ENCODE measurements at regions of chr1 and their contacts with region 1.

Region 1: GRCh38 chr1:1115786-1116700 is at the start of gene C1orf159:
- DNase-seq: peak; percentile 98 to 100 (median 98)
- ATAC-seq: peak; percentile 94
- H3K4me3 ChIP-seq: peak within 1 kb of the TSS; percentile 51 to 66
- H3K4me3 Mint-ChIP-seq: peak within 1 kb of the TSS; percentile 90
- H3K27ac ChIP-seq: peak within 1 kb of the TSS; percentile 47 to 64
- H3K27ac Mint-ChIP-seq: peak within 1 kb of the TSS; percentile 82
- H3K4me1 ChIP-seq: peaks cover 11% of the 10 kb centered on the region
- H3K4me1 Mint-ChIP-seq: peaks cover 13% of the 10 kb centered on the region
- H3K27me3 ChIP-seq: peaks cover 0 to 3% of the 10 kb centered on the region in 2 experiments
- H3K27me3 Mint-ChIP-seq: peaks cover 4% of the 10 kb centered on the region
- CTCF ChIP-seq: no peak
- total RNA-seq, gene C1orf159: 14.3 to 17.6 TPM

Region 2: GRCh38 chr1:975896-976683 is 140.0 kb before region 1 on chr1:
- CTCF ChIA-PET with region 1: no interaction called
- POLR2A ChIA-PET with region 1: no interaction called
- intact Hi-C with region 1: no loop called
- DNase-seq: peak in 8 of 9 experiments; percentile 56 to 82 (median 72)
- ATAC-seq: peak; percentile 88
- H3K4me3 ChIP-seq: no peak overlapping the region
- H3K4me3 Mint-ChIP-seq: peak overlapping the region; percentile 37
- H3K27ac ChIP-seq: no peak overlapping the region
- H3K27ac Mint-ChIP-seq: no peak overlapping the region
- H3K4me1 ChIP-seq: peaks cover 9% of the 10 kb centered on the region
- H3K4me1 Mint-ChIP-seq: peaks cover 9% of the 10 kb centered on the region
- H3K27me3 ChIP-seq: peaks cover 8 to 27% of the 10 kb centered on the region in 2 experiments
- H3K27me3 Mint-ChIP-seq: peaks cover 19% of the 10 kb centered on the region
- CTCF ChIP-seq: peak; percentile 59

Region 3: GRCh38 chr1:1013105-1013921 is 102.7 kb before region 1 on chr1 and contains the start of gene ISG15:
- CTCF ChIA-PET with region 1: no interaction called
- POLR2A ChIA-PET with region 1: interaction called, 3 read pairs
- intact Hi-C with region 1: loop called in 1 of 2 experiments (anchors 1 kb)
- DNase-seq: peak; percentile 79 to 96 (median 90)
- ATAC-seq: peak; percentile 94
- H3K4me3 ChIP-seq: peak within 1 kb of the TSS; percentile 75 to 78
- H3K4me3 Mint-ChIP-seq: peak within 1 kb of the TSS; percentile 98
- H3K27ac ChIP-seq: peak within 1 kb of the TSS; percentile 79 to 87
- H3K27ac Mint-ChIP-seq: peak within 1 kb of the TSS; percentile 99
- H3K4me1 ChIP-seq: peaks cover 23% of the 10 kb centered on the region
- H3K4me1 Mint-ChIP-seq: peaks cover 40% of the 10 kb centered on the region
- H3K27me3 ChIP-seq: no peaks in the 10 kb centered on the region
- H3K27me3 Mint-ChIP-seq: peaks cover 4% of the 10 kb centered on the region
- CTCF ChIP-seq: no peak
- total RNA-seq, gene ISG15: 56.4 to 58.4 TPM

Region 4: DNA sequence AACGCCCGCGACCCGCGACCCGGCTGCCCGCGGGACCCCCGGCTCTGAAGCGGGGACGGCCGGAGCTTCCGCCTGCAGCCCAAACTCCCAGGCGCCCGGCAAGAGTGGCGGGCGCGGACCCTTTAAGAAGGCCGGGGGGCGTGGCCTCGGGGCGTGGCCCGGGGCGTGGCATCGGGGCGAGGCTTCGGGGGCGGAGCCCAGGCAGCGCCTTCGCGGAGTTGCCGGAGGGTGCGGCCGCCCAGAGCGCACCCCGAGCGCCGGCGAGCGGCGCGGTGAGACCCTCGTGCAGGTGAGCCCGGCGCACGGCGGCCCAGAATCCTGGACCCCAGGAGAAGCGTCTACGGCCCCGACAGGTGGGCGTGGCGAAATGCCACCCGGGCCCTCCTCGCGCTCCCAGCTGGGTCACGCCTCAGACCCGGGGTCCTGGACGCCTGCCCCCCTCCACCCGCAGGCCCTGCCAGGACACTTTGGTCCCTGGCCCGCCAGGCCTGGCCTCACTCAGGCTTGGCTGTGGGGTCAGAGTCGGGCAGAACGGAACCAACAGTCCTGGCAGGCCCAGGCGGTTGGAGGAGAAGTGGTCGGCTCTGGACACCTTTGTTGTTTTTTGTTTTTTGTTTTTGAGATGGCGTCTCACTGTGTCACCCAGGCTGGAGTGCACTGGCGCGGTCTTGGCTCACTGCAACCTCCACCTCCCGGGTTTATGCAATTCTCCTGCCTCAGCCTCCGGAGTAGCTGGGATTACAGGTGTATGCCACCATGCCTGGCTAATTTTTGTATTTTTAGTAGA is 56.4 kb before region 1 on chr1:
- CTCF ChIA-PET with region 1: interaction called, 3 read pairs
- POLR2A ChIA-PET with region 1: no interaction called
- intact Hi-C with region 1: loop called in 1 of 2 experiments (anchors 1 kb)
- DNase-seq: peak; percentile 86 to 96 (median 90)
- ATAC-seq: peak; percentile 67
- H3K4me3 ChIP-seq: peak overlapping the region; percentile 19 to 66
- H3K4me3 Mint-ChIP-seq: peak overlapping the region; percentile 51
- H3K27ac ChIP-seq: no peak overlapping the region
- H3K27ac Mint-ChIP-seq: no peak overlapping the region
- H3K4me1 ChIP-seq: peaks cover 45% of the 10 kb centered on the region
- H3K4me1 Mint-ChIP-seq: peaks cover 13% of the 10 kb centered on the region
- H3K27me3 ChIP-seq: peaks cover 0 to 38% of the 10 kb centered on the region in 2 experiments
- H3K27me3 Mint-ChIP-seq: peaks cover 17% of the 10 kb centered on the region
- CTCF ChIP-seq: no peak

Region 5: DNA sequence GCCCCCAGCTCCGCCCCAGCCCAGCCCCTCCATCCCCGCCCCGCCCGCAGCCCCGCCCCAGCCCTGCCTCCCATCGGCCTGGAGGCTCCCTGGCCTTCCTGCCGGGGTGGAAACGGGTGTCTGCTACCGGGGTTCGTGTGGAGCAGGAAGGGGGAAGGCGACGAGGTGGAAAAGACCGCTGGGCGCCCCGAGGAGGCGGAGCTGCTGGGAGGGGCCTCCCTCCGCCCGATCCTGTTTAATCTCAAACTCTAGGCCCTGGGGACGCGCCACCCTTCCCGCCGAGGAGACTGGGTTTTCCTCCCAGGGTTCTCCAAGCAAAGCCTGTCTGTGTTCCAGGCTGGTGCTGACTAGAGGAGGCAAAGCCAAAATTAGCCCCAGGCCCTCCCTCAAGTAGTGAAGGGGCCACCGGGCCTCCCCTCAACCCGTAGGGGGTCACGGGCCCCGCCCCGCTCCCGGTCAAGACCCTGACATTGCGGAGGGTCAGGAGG is 41.4 kb after region 1 on chr1:
- CTCF ChIA-PET with region 1: no interaction called
- POLR2A ChIA-PET with region 1: no interaction called
- intact Hi-C with region 1: no loop called
- DNase-seq: peak in 8 of 9 experiments; percentile 43 to 82 (median 60)
- ATAC-seq: peak; percentile 75
- H3K4me3 ChIP-seq: peak overlapping the region; percentile 71 to 90
- H3K4me3 Mint-ChIP-seq: peak overlapping the region; percentile 78
- H3K27ac ChIP-seq: peak overlapping the region; percentile 70 to 87
- H3K27ac Mint-ChIP-seq: peak overlapping the region; percentile 69
- H3K4me1 ChIP-seq: peaks cover 10% of the 10 kb centered on the region
- H3K4me1 Mint-ChIP-seq: peaks cover 2% of the 10 kb centered on the region
- H3K27me3 ChIP-seq: no peaks in the 10 kb centered on the region
- H3K27me3 Mint-ChIP-seq: no peaks in the 10 kb centered on the region
- CTCF ChIP-seq: no peak

Region 6: GRCh38 chr1:1231400-1232223 is 115.6 kb after region 1 on chr1 and contains the start of gene SDF4:
- CTCF ChIA-PET with region 1: interaction called, 3 read pairs
- POLR2A ChIA-PET with region 1: no interaction called
- intact Hi-C with region 1: loop called (anchors 1 kb)
- DNase-seq: peak; percentile 91 to 99 (median 96)
- ATAC-seq: peak; percentile 93
- H3K4me3 ChIP-seq: peak within 1 kb of the TSS; percentile 92 to 96
- H3K4me3 Mint-ChIP-seq: peak within 1 kb of the TSS; percentile 93
- H3K27ac ChIP-seq: peak within 1 kb of the TSS; percentile 80 to 88
- H3K27ac Mint-ChIP-seq: peak within 1 kb of the TSS; percentile 92
- H3K4me1 ChIP-seq: peaks cover 40% of the 10 kb centered on the region
- H3K4me1 Mint-ChIP-seq: peaks cover 39% of the 10 kb centered on the region
- H3K27me3 ChIP-seq: no peaks in the 10 kb centered on the region
- H3K27me3 Mint-ChIP-seq: no peaks in the 10 kb centered on the region
- CTCF ChIP-seq: no peak
- total RNA-seq, gene SDF4: 66.6 to 70.3 TPM

Region 7: GRCh38 chr1:1349256-1350012 is 233.4 kb after region 1 on chr1 and contains the start of gene DVL1:
- CTCF ChIA-PET with region 1: no interaction called
- POLR2A ChIA-PET with region 1: no interaction called
- intact Hi-C with region 1: loop called in 1 of 2 experiments (anchors 1 kb)
- DNase-seq: peak; percentile 50 to 86 (median 72)
- ATAC-seq: peak; percentile 84
- H3K4me3 ChIP-seq: peak within 1 kb of the TSS; percentile 57 to 63
- H3K4me3 Mint-ChIP-seq: peak within 1 kb of the TSS; percentile 76
- H3K27ac ChIP-seq: peak within 1 kb of the TSS; percentile 46 to 72
- H3K27ac Mint-ChIP-seq: peak within 1 kb of the TSS; percentile 41
- H3K4me1 ChIP-seq: peaks cover 27% of the 10 kb centered on the region
- H3K4me1 Mint-ChIP-seq: peaks cover 29% of the 10 kb centered on the region
- H3K27me3 ChIP-seq: peaks cover 0 to 16% of the 10 kb centered on the region in 2 experiments
- H3K27me3 Mint-ChIP-seq: peaks cover 8% of the 10 kb centered on the region
- CTCF ChIP-seq: peak; percentile 43
- total RNA-seq, gene DVL1: 44.5 to 45.5 TPM